ENCODE measurements at regions of chr12 and their contacts with region 1.

Region 1: GRCh38 chr12:120228291-120229070 is 27.6 kb upstream of the RPLP0 start:
- DNase-seq: peak; percentile 88 to 92
- ATAC-seq: peak; percentile 31 to 72
- H3K4me3 ChIP-seq: no peak overlapping the region
- H3K27ac ChIP-seq: peak overlapping the region; percentile 93 to 100
- H3K4me1 ChIP-seq: peaks cover 90% of the 10 kb centered on the region
- CTCF ChIP-seq: peak; percentile 97
- EP300 ChIP-seq: no peak
- POLR2A ChIP-seq: no peak
- RAD21 ChIP-seq: peak; percentile 99 to 100

Region 2: GRCh38 chr12:120194534-120195395 is 33.7 kb before region 1 on chr12 and contains the start of gene GCN1:
- CTCF ChIA-PET with region 1: interaction called, 308 read pairs
- POLR2A ChIA-PET with region 1: interaction called, 132 read pairs
- DNase-seq: peak; percentile 76 to 84
- ATAC-seq: peak; percentile 84 to 87
- H3K4me3 ChIP-seq: peak within 1 kb of the TSS; percentile 68
- H3K27ac ChIP-seq: peak within 1 kb of the TSS; percentile 95 to 97
- H3K4me1 ChIP-seq: peaks cover 54% of the 10 kb centered on the region
- CTCF ChIP-seq: no peak
- EP300 ChIP-seq: no peak
- POLR2A ChIP-seq: peak; percentile 96
- RAD21 ChIP-seq: no peak
- polyA plus RNA-seq, gene GCN1: 64.1 and 81.5 TPM in 2 replicates

Region 3: GRCh38 chr12:120216742-120217605 is 11.5 kb before region 1 on chr12:
- CTCF ChIA-PET with region 1: interaction called, 308 read pairs
- POLR2A ChIA-PET with region 1: no interaction called
- DNase-seq: no peak
- ATAC-seq: no peak; a peak in 1 of 6 replicates
- H3K4me3 ChIP-seq: no peak overlapping the region
- H3K27ac ChIP-seq: no peak overlapping the region
- H3K4me1 ChIP-seq: no peaks in the 10 kb centered on the region
- CTCF ChIP-seq: no peak
- EP300 ChIP-seq: no peak
- POLR2A ChIP-seq: no peak
- RAD21 ChIP-seq: no peak

Region 4: DNA sequence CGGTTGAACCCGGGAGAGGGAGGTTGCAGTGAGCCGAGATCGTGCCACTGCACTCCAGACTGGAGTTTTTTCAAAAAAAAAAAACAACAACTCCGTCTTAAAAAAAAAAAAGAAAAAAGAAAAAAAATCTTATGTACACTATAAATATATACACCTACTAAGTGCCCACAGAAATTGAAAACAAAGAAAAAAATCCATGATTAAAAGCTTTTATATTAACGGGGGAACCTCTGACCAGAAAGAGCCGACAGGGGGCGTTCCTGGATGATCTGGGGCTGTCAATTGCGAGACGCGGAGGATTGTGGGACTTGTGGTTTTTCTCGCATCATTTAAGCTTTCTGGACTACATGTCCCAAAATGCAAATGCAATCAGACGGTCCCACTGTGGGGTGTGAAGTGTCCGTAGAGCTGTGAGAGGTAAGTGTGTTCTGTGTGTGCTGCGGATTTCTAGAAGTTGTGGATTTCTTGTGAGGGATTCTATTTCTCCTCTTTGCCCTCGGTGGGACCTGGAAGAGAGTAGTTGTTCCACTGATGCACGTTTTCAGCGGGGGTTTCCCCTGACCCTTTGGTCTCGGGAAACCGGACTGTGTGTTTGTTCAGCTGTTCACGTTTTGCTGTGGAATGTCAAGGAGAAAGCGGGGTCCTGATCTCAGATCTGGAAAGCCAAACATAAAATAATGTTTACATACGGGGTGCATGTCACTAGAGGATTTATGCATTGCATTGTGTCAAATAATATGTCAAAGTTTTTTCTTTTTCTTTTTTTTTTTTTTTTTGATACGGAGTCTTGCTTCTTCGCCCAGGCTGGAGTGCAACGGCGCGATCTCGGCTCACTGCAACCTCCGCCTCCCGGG is 73.7 kb after region 1 on chr12 and contains the start of gene SIRT4:
- CTCF ChIA-PET with region 1: interaction called, 21 read pairs
- POLR2A ChIA-PET with region 1: interaction called, 4 read pairs
- DNase-seq: peak; percentile 95 to 98
- ATAC-seq: peak; percentile 98 to 99
- H3K4me3 ChIP-seq: peak within 1 kb of the TSS; percentile 58
- H3K27ac ChIP-seq: peak within 1 kb of the TSS; percentile 63 to 74
- H3K4me1 ChIP-seq: peaks cover 3% of the 10 kb centered on the region; the same call in 1 of the 3 replicates
- CTCF ChIP-seq: peak; percentile 90
- EP300 ChIP-seq: no peak
- POLR2A ChIP-seq: no peak
- RAD21 ChIP-seq: peak; percentile 30 to 48; a peak in 2 of 5 replicates
- polyA plus RNA-seq, gene SIRT4: 1.6 and 2.6 TPM in 2 replicates

Region 5: DNA sequence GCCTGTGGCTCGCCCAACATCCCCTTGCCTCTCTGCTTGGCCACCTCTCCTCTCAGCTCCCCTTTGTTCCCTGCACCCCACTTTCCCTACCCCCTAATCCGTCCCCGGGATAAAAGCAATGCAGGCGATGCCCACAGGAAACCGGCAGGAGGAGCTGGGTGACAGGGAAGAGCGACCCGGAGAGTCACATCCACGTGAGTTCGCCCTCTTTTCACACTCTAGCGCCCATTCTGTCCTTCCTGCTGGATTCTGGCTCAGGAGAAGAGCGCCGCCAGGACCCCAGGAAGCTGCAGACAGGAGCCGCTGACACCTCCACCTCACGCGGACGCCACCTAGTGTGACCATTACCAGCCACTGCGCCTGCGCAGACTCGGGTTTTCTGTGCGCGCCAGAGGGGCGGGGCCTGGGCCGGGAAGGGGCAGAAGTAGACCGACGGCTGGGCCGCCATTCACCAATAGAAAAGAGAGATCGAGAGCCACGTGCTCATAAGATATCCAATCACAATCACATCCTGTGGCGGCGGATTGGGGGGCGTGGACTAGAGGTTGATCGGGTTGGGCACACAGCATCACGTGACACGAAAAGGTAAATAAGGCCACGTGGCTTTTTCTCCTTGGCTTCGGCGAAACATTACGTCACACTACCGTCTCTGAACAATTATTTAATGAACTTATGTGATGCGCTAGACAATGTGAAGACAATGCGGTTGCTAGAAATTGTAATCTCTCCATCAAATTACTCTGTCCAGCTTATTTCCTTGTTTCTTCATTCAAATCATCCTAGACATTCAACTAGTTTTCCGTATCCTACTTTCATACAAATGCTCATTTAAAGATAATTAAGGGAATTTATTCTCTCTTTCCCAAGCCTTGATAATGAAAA is 89.0 kb after region 1 on chr12:
- CTCF ChIA-PET with region 1: interaction called, 11 read pairs
- POLR2A ChIA-PET with region 1: interaction called, 5 read pairs
- DNase-seq: peak; percentile 99 to 100
- ATAC-seq: peak; percentile 94 to 98
- H3K4me3 ChIP-seq: peak overlapping the region; percentile 56
- H3K27ac ChIP-seq: peak overlapping the region; percentile 83 to 90
- H3K4me1 ChIP-seq: peaks cover 23% of the 10 kb centered on the region
- CTCF ChIP-seq: peak; percentile 61
- EP300 ChIP-seq: no peak
- POLR2A ChIP-seq: peak; percentile 89
- RAD21 ChIP-seq: 0 out of 5 replicates have a peak, but pooled peaks have one; percentile 20 to 30